ENCODE measurements at regions of chr7 and their contacts with region 1.

Region 1: GRCh38 chr7:49228426-49229098 is 304.2 kb downstream of the CDC14C start:
- DNase-seq: no peak
- ATAC-seq: no peak
- H3K4me3 ChIP-seq: no peak overlapping the region
- H3K4me3 Mint-ChIP-seq: no peak overlapping the region
- H3K27ac ChIP-seq: no peak overlapping the region
- H3K27ac Mint-ChIP-seq: no peak overlapping the region
- H3K4me1 ChIP-seq: no peaks in the 10 kb centered on the region
- H3K4me1 Mint-ChIP-seq: no peaks in the 10 kb centered on the region
- H3K27me3 ChIP-seq: no peaks in the 10 kb centered on the region
- H3K27me3 Mint-ChIP-seq: no peaks in the 10 kb centered on the region
- CTCF ChIP-seq: no peak

Region 2: DNA sequence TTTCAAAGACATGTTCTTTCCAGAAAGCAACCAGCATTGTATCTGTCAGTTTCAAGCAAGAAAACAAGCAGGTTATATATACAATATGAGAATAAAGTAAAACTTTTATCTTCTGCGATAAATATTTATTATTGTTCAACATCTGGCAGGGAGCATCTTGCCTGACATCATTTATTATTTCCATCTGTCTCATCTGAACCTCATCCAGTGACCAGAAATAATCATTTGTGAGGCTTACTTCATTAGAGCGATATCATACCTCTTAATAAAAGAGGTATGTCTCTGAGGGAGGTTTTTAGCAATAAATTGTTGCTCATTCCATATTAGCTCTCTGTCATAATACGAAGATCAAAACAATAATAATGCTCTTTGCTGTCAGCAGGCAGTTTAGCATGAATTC is 78.1 kb before region 1 on chr7:
- CTCF ChIA-PET with region 1: no interaction called
- POLR2A ChIA-PET with region 1: no interaction called
- intact Hi-C with region 1: loop called in 1 of 2 experiments (anchors 2 kb)
- DNase-seq: no peak
- ATAC-seq: no peak
- H3K4me3 ChIP-seq: no peak overlapping the region
- H3K4me3 Mint-ChIP-seq: no peak overlapping the region
- H3K27ac ChIP-seq: no peak overlapping the region
- H3K27ac Mint-ChIP-seq: no peak overlapping the region
- H3K4me1 ChIP-seq: no peaks in the 10 kb centered on the region
- H3K4me1 Mint-ChIP-seq: no peaks in the 10 kb centered on the region
- H3K27me3 ChIP-seq: no peaks in the 10 kb centered on the region
- H3K27me3 Mint-ChIP-seq: no peaks in the 10 kb centered on the region
- CTCF ChIP-seq: no peak

Measured in CD8-positive, alpha-beta T cell (primary cell).